Transverse colon (tissue), 4 donors: ENCODE measurements at regions of chr16 and their contacts with region 1.

Region 1: GRCh38 chr16:68229431-68230198 is 6.3 kb downstream of the ESRP2 start:
- DNase-seq: no peak
- H3K4me3 ChIP-seq: no peak overlapping the region
- H3K27ac ChIP-seq: peak overlapping the region; percentile 16 to 62 (median 48)
- H3K4me1 ChIP-seq: peaks cover 10 to 52% (median 35%) of the 10 kb centered on the region in 4 donors
- H3K27me3 ChIP-seq: no peaks in the 10 kb centered on the region
- CTCF ChIP-seq: peak; percentile 85 to 89 (median 87)
- EP300 ChIP-seq: no peak
- POLR2A ChIP-seq: no peak

Region 2: GRCh38 chr16:66940226-66940625 is 1289.4 kb before region 1 on chr16:
- in situ Hi-C with region 1: no loop called
- intact Hi-C with region 1: loop called (anchors 5 kb)
- DNase-seq: no peak
- H3K4me3 ChIP-seq: no peak overlapping the region
- H3K27ac ChIP-seq: no peak overlapping the region
- H3K4me1 ChIP-seq: peaks cover 8 to 35% (median 26%) of the 10 kb centered on the region in 4 donors
- H3K27me3 ChIP-seq: no peaks in the 10 kb centered on the region
- CTCF ChIP-seq: no peak
- EP300 ChIP-seq: no peak
- POLR2A ChIP-seq: no peak

Region 3: DNA sequence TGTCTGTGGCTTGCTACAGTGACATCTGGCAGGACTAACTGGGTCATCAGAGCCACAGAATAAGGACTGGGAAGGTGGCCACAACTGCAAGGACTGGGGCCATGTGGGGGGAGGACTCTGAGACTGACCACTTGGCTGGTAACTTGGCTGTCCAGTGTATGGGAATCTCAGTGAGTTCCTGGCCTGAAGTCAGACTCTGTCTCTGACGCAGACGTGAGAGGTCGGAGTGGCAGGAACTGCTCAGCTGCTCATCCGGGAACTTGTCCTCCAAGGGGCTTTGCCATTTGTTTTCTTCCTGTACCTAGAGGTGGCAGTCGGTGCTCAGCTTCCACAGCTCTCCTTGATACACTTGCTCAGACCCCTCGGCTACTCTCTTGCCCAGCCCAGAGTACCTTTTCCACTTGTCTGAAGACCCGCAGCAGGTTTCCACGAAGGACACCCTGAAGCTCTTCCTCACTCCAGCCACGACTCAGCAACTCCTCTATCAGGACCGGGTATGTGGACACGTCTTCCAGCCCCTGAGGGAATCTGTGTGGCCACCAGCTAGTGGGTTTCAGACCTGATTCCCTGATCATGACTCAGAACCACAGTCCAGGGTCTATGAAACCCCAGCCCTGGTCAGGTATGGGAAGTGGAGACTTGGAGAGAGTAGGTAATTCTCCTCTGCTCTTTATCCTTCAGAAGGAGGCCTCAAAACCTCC is 242.0 kb before region 1 on chr16:
- in situ Hi-C with region 1: no loop called
- intact Hi-C with region 1: loop called (anchors 5 kb)
- DNase-seq: no peak
- H3K4me3 ChIP-seq: no peak overlapping the region
- H3K27ac ChIP-seq: peak overlapping the region in 1 of 4 donors; percentile 9
- H3K4me1 ChIP-seq: peaks cover 0 to 20% (median 0%) of the 10 kb centered on the region in 4 donors
- H3K27me3 ChIP-seq: no peaks in the 10 kb centered on the region
- CTCF ChIP-seq: no peak
- EP300 ChIP-seq: no peak
- POLR2A ChIP-seq: no peak

Region 4: DNA sequence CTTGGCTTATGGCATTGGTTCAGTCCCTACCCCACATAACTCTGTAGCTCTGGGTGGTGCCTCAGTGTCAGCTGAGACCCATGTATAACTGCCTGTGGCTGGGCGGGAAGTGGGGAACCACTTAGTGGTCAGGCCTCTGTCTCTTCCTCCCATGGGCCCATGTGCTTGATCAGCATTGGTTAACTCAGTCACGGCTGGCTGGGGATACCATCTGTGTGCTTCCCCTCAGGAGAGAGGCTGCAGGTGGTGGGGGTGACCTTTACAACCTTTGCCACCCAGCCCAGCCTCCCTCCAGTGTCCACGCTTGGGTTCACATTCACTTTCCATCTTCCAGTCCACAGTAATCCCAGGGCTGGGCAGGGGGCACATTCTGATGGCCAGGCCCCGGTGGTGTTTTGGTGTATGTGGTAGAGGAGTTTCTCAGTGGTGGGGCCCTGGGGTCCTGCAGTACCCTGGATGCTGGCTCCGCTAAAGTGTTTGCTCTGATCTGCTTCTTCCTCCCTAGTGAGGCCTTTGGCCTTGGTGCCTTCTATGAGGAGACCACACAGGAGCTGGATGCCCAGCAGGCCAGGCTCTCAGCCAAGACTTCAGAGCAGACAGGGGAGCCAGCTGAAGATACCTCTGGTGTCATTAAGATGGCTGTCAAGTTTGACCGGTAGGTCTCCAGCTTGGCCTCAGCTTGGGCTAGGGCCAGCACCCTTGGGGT is 154.6 kb before region 1 on chr16:
- in situ Hi-C with region 1: loop called in 2 of 4 experiments (anchors 10 to 25 kb)
- intact Hi-C with region 1: loop called (anchors 10 kb)
- DNase-seq: peak; percentile 68
- H3K4me3 ChIP-seq: no peak overlapping the region
- H3K27ac ChIP-seq: no peak overlapping the region
- H3K4me1 ChIP-seq: peaks cover 11 to 35% (median 15%) of the 10 kb centered on the region in 4 donors
- H3K27me3 ChIP-seq: no peaks in the 10 kb centered on the region
- CTCF ChIP-seq: no peak
- EP300 ChIP-seq: no peak
- POLR2A ChIP-seq: no peak